Activated CD4-positive, alpha-beta T cell treated with anti-CD3 and anti-CD28 coated beads, Interleukin-2, amount 10 ng/mL, durations not matched to agents 7 days and 5 days (primary cell): ENCODE measurements at regions of chr1 and their contacts with region 1.

Region 1: GRCh38 chr1:210373885-210374599 is 45.3 kb downstream of the HHAT start:
- DNase-seq: peak; percentile 76
- H3K4me3 Mint-ChIP-seq: no peak overlapping the region
- H3K27ac Mint-ChIP-seq: peak overlapping the region; percentile 79
- H3K4me1 Mint-ChIP-seq: peaks cover 19% of the 10 kb centered on the region
- H3K27me3 Mint-ChIP-seq: peaks cover 3% of the 10 kb centered on the region

Region 2: DNA sequence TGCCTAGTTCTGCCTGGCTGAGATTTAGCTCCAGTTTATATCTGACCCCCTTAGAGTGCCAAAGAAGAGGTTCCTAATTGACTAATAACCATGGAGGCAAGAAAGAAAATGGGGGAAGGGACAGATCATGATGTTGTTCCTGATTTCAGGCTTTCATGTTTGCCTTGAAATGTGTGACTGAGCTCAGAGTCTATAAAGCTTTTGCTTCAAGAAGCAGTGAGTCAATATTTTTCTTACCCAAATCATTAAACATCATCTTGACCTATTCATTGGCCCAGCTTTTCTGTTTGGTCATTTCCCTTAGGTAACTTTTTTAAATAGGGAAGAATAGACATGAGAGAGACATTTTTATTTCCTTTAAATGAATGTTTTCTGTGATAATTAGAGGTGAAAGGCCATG is 10.6 kb after region 1 on chr1:
- CTCF ChIA-PET with region 1: interaction called, 18 read pairs
- POLR2A ChIA-PET with region 1: interaction called, 3 read pairs
- DNase-seq: no peak
- H3K4me3 Mint-ChIP-seq: no peak overlapping the region
- H3K27ac Mint-ChIP-seq: no peak overlapping the region
- H3K4me1 Mint-ChIP-seq: no peaks in the 10 kb centered on the region
- H3K27me3 Mint-ChIP-seq: peaks cover 2% of the 10 kb centered on the region